Prostate gland (tissue), 2 donors: ENCODE measurements at regions of chr18 and their contacts with region 1.

Region 1: DNA sequence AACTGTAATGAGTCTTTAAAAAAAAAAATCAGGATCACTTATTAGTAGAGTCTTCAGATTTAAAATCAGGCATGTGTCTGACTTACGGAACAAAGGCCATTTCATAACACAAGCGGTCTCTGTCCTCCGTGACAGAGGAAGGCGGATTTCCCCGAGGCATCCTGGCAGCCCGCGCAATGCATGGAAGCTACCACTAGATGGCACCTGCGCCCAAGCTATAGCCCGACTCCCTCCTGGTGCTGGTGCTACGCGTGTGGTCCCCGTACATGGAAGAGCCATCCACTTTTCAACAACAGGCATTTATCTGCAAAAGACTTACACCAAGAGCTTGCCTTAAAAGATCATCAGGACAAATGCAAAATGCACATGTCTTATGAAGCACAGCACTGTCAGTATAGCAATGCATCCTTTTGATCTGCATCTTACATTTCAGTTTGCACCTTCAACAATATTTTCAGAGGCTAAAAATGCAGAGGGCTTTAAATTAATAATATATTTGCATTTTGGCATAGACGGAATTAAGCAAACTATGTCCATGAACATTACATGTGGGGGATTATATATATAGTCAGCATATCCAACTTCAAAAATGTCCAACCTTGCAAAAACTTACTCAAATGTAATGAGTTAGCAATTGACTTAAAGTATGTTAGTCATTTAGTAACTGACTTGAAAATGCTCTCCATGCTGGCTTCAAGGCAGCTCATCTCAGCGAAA is 96.0 kb downstream of the ZNF516 start:
- DNase-seq: peak; percentile 79
- H3K4me3 ChIP-seq: no peak overlapping the region
- H3K27ac ChIP-seq: no peak overlapping the region
- H3K4me1 ChIP-seq: no peaks in the 10 kb centered on the region
- H3K27me3 ChIP-seq: no peaks in the 10 kb centered on the region
- CTCF ChIP-seq: peak; percentile 83 to 96 (median 93)
- POLR2A ChIP-seq: no peak

Region 2: GRCh38 chr18:76426737-76427305 is 27.8 kb after region 1 on chr18:
- intact Hi-C with region 1: loop called (anchors 2 kb)
- DNase-seq: peak; percentile 49
- H3K4me3 ChIP-seq: no peak overlapping the region
- H3K27ac ChIP-seq: no peak overlapping the region
- H3K4me1 ChIP-seq: peaks cover 2% of the 10 kb centered on the region
- H3K27me3 ChIP-seq: no peaks in the 10 kb centered on the region
- CTCF ChIP-seq: peak in 3 of 4 experiments; percentile 62 to 70 (median 62)
- POLR2A ChIP-seq: no peak

Region 3: DNA sequence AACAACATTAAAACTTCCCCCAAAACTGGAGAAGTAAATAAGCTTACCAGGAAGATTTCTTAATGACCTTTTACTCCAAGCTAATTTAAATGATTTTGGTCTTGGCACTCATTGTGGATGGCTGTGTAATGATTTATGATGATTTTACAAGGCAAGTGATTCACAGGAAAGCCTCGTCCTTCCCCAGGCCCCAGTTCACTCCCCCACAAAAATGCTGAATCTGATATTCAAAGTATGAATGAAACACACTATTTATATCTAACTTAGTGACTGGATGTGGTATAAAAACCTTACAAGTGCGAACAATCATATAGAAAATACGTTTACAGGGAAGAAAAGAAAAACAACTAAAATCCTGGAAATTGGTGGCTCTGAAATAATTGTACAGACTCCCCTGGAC is 46.2 kb after region 1 on chr18:
- intact Hi-C with region 1: no loop called
- DNase-seq: no peak
- H3K4me3 ChIP-seq: no peak overlapping the region
- H3K27ac ChIP-seq: peak overlapping the region in 1 of 2 donors; percentile 84
- H3K4me1 ChIP-seq: peaks cover 5% of the 10 kb centered on the region
- H3K27me3 ChIP-seq: no peaks in the 10 kb centered on the region
- CTCF ChIP-seq: no peak
- POLR2A ChIP-seq: no peak

Region 4: GRCh38 chr18:76620321-76621170 is 221.5 kb after region 1 on chr18:
- intact Hi-C with region 1: loop called (anchors 2 kb)
- DNase-seq: peak; percentile 42
- H3K4me3 ChIP-seq: peak overlapping the region; percentile 6 to 19
- H3K27ac ChIP-seq: peak overlapping the region; percentile 78 to 84
- H3K4me1 ChIP-seq: no peaks in the 10 kb centered on the region
- H3K27me3 ChIP-seq: no peaks in the 10 kb centered on the region
- CTCF ChIP-seq: peak; percentile 21 to 57 (median 48)
- POLR2A ChIP-seq: no peak

Region 5: DNA sequence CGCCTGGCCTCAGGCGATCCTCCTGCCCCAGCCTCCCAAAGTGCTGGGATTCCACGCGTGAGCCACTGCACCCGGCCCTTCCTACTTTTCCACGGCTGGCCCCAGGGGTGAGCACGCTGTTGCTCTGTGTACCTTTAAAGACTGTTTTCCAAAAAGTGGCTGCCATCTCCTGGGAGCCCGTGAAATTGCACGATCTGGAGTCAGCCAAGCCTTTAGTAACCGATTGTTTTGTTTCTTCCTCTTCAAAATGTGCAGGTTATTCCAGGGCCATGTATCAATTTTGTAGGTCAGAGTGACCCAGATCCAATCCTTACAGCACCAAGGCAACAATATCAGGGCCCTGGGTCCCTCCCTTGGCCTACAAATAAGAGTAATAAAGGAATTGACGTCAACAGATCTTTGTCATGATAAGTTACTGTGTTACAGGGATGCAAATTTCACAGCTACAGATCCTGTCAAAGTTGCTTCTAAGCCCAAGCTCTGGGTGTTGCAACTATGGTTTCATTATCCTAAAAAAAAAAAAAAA is 287.7 kb after region 1 on chr18:
- intact Hi-C with region 1: loop called (anchors 5 kb)
- DNase-seq: peak; percentile 53
- H3K4me3 ChIP-seq: no peak overlapping the region
- H3K27ac ChIP-seq: peak overlapping the region; percentile 16 to 28
- H3K4me1 ChIP-seq: no peaks in the 10 kb centered on the region
- H3K27me3 ChIP-seq: no peaks in the 10 kb centered on the region
- CTCF ChIP-seq: peak; percentile 25 to 75 (median 67)
- POLR2A ChIP-seq: no peak

Region 6: GRCh38 chr18:76709659-76710645 is 310.9 kb after region 1 on chr18:
- intact Hi-C with region 1: loop called (anchors 5 kb)
- DNase-seq: peak; percentile 51
- H3K4me3 ChIP-seq: no peak overlapping the region
- H3K27ac ChIP-seq: no peak overlapping the region
- H3K4me1 ChIP-seq: no peaks in the 10 kb centered on the region
- H3K27me3 ChIP-seq: no peaks in the 10 kb centered on the region
- CTCF ChIP-seq: peak; percentile 75 to 92 (median 82)
- POLR2A ChIP-seq: no peak

Region 7: GRCh38 chr18:77197073-77197472 is 798.0 kb after region 1 on chr18:
- intact Hi-C with region 1: no loop called
- DNase-seq: no peak
- H3K4me3 ChIP-seq: no peak overlapping the region
- H3K27ac ChIP-seq: no peak overlapping the region
- H3K4me1 ChIP-seq: no peaks in the 10 kb centered on the region
- H3K27me3 ChIP-seq: no peaks in the 10 kb centered on the region
- CTCF ChIP-seq: no peak
- POLR2A ChIP-seq: no peak